ENCODE measurements at regions of chr13 and their contacts with region 1.

Region 1: DNA sequence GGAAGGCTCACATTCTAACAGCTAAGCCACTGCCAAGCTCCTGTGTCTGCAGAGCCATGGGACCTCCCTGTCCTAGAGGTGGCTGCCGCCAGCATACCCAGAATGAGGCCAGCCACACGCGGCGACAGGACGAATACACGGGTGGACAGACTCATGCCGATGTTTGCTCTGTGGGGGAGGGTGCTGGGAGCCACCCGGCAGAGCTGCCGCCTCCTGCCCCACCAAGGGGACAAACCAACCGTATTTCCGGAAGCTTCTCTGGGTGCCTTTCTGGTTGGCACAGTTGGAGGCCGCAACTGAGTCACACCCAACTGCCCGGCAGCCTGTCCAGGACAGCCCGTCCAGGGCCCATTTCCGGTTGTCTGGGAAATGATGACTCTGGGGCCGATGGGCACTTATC is 20.3 kb downstream of the C13orf46 start:
- DNase-seq: no peak
- H3K27ac ChIP-seq: peak overlapping the region; percentile 15; the same call in 1 of the 2 replicates
- CTCF ChIP-seq: no peak

Region 2: GRCh38 chr13:114226699-114227323 is 273.2 kb after region 1 on chr13:
- CTCF ChIA-PET with region 1: interaction called, 10 read pairs
- POLR2A ChIA-PET with region 1: no interaction called
- DNase-seq: peak; percentile 81
- H3K27ac ChIP-seq: peak overlapping the region; percentile 53
- CTCF ChIP-seq: peak; percentile 93